SK-N-SH (cell line): ENCODE measurements at regions of chrX and their contacts with region 1.

Region 1: DNA sequence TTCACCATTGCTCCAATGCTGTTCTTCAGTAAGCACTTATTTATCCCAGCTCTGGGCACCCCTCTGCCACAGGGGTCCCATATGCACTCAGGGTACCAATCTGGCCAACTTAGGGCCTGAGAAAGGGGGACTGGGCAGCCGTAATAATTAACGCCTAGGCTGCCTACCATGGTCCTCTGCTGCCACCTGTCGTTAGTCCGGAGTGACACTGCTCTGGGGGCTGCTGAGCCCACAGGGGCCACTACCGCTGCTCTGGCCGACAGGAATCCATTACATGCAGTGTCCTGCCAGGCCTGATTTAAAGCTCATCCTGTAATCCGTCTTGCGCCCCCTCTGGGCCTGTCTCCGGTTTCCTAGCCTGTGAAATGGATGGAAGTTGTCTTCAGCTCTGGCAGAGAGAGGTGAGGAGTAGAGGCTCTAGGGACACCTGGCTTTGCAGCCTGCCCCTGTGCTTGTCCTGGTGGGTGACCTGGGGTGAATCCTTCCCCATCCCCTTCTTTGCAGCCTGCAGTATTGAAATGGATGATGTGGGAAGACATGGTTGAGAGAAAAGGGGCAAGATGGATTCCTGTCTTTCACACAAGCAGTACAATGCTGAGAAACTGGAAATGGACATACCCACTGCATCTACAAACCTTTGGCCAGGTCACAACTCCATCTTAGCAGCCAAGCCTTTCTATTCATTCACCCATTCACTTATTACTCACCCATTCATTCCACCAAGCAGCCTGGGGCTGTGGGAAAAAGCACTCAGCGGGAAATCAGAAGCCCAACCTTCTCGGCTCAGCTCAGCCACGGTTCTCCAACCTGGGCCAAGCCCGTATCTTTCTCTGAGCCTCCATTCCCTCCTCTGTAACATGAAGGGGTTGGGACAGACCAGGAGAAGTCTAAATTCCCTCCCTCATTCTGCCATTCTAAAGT is 116.3 kb upstream of the NALF2 start:
- DNase-seq: peak; percentile 78
- H3K4me3 ChIP-seq: peak overlapping the region in 1 of 2 experiments; percentile 39; a peak in 1 of 4 replicates
- H3K27ac ChIP-seq: no peak overlapping the region
- H3K4me1 ChIP-seq: peaks cover 0 to 24% of the 10 kb centered on the region in 2 experiments; a peak in 2 of 4 replicates
- H3K27me3 ChIP-seq: peaks cover 34% of the 10 kb centered on the region; the same call in 1 of the 2 replicates
- CTCF ChIP-seq: peak; percentile 84
- EP300 ChIP-seq: no peak
- RAD21 ChIP-seq: peak; percentile 82

Region 2: DNA sequence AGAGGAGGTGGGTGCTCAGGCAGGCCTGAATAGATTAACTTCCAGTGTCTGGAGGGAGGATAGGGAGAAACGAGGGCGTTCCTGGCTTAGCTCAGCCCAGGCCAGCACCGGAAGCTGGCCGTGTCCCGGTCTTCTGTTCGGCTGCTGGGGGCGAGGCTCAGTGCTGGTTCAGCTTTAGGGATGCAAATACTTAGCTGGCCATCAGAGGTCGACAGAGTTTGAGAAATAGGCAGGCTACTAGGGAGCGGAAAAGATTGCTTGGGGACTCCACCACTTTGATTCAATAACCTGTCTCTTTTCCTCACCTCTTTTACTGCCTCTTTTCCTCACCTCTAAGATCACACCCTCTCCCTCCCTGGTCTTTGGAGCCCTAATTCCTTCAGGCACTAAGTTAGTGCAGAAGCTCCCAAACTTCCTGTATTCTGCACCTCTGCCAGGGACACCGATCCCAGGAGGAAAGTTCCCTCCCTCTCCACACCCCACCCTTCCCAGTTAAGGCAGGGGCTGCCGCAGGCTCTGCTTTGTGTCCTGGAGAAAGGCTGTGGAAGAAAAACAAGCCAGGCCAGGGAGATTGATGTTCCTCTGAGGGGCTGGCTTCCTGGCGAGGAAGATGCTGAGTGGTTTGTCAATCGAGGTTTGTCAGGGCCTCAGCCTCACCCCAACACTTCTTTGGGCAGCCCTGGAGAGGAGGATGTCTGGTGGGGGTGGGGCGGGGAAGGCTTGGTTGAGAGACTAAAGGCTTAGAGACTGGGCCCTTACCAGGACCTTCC is 565.0 kb before region 1 on chrX:
- CTCF ChIA-PET with region 1: interaction called, 20 read pairs
- POLR2A ChIA-PET with region 1: interaction called, 6 read pairs
- DNase-seq: peak; percentile 66
- H3K4me3 ChIP-seq: no peak overlapping the region
- H3K27ac ChIP-seq: no peak overlapping the region
- H3K4me1 ChIP-seq: no peaks in the 10 kb centered on the region; a peak in 1 of 4 replicates
- H3K27me3 ChIP-seq: peaks cover 6% of the 10 kb centered on the region; the same call in 1 of the 2 replicates
- CTCF ChIP-seq: peak; percentile 67
- EP300 ChIP-seq: no peak
- RAD21 ChIP-seq: peak; percentile 87

Region 3: DNA sequence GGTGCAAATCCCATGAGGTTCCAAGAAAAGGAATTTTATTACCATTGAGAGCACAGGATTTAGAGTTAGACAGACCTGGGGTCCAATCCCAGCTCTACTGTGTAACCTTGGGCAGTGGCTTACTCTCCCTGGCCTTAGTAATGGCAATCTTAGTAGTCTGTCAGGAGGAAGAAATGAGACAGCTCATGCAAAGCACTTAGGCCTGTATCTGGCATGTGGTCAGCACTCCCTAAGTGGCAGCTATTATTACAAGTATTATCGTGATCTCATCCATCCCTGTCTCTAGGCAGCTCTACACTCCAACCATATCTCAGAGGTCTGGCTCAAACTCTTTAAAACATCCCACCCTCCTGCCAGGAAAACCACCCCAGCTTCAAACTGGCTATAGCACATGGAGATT is 13.3 kb before region 1 on chrX:
- CTCF ChIA-PET with region 1: interaction called, 31 read pairs
- POLR2A ChIA-PET with region 1: no interaction called
- DNase-seq: no peak
- H3K4me3 ChIP-seq: no peak overlapping the region
- H3K27ac ChIP-seq: no peak overlapping the region
- H3K4me1 ChIP-seq: no peaks in the 10 kb centered on the region
- H3K27me3 ChIP-seq: peaks cover 5% of the 10 kb centered on the region; the same call in 1 of the 2 replicates
- CTCF ChIP-seq: no peak
- EP300 ChIP-seq: no peak
- RAD21 ChIP-seq: no peak

Region 4: GRCh38 chrX:69415698-69416097 is 27.9 kb after region 1 on chrX:
- CTCF ChIA-PET with region 1: interaction called, 10 read pairs
- POLR2A ChIA-PET with region 1: no interaction called
- DNase-seq: no peak
- H3K4me3 ChIP-seq: no peak overlapping the region
- H3K27ac ChIP-seq: no peak overlapping the region
- H3K4me1 ChIP-seq: no peaks in the 10 kb centered on the region
- H3K27me3 ChIP-seq: peaks cover 4% of the 10 kb centered on the region; the same call in 1 of the 2 replicates
- CTCF ChIP-seq: no peak
- EP300 ChIP-seq: no peak
- RAD21 ChIP-seq: no peak